Dendritic cell treated with granulocyte-macrophage colony-stimulating factor and Interleukin-4, amounts not matched to agents 40 ng/mL and 50 ng/mL, for 4 days (primary cell): ENCODE measurements at regions of chr1 and their contacts with region 1.

Region 1: GRCh38 chr1:17045634-17046333 is 8.0 kb downstream of the SDHB start:
- H3K4me3 Mint-ChIP-seq: no peak overlapping the region
- H3K27ac Mint-ChIP-seq: peak overlapping the region; percentile 92
- H3K4me1 Mint-ChIP-seq: peaks cover 34% of the 10 kb centered on the region
- H3K27me3 Mint-ChIP-seq: no peaks in the 10 kb centered on the region

Region 2: GRCh38 chr1:16946646-16947045 is 99.1 kb before region 1 on chr1:
- intact Hi-C with region 1: loop called (anchors 1 kb)
- H3K4me3 Mint-ChIP-seq: no peak overlapping the region
- H3K27ac Mint-ChIP-seq: no peak overlapping the region
- H3K4me1 Mint-ChIP-seq: no peaks in the 10 kb centered on the region
- H3K27me3 Mint-ChIP-seq: no peaks in the 10 kb centered on the region

Region 3: DNA sequence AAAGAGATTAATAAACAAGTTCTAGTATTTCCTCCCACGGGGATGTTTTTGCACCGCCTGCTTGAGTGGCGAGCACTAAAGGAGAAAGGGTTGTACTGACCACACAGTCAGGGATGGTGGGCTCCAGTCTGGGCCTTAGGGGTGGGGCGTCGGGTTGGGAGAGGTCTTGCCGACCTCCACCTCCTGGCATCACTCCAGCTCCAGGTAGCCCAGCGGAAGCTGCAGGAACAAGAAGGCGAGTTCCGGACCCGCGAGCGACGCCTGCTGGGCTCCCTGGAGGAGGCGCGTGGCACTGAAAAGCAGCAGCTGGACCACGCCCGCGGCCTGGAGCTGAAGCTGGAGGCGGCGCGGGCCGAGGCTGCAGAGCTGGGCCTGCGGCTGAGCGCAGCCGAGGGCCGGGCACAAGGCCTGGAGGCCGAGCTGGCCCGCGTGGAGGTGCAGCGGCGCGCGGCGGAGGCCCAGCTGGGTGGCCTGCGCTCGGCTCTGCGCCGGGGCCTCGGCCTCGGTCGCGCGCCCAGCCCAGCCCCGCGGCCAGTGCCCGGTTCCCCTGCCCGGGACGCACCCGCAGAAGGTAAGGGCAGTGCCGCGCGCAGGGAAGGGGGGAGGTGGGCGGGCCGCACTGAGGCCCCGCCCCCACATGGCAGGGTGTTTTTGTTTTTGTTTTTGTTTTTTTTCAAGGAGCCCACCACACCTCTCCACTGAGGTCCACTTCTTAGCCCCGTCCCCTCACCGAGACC is 85.1 kb before region 1 on chr1:
- intact Hi-C with region 1: loop called (anchors 2 kb)
- H3K4me3 Mint-ChIP-seq: peak overlapping the region; percentile 55
- H3K27ac Mint-ChIP-seq: peak overlapping the region; percentile 45
- H3K4me1 Mint-ChIP-seq: peaks cover 8% of the 10 kb centered on the region
- H3K27me3 Mint-ChIP-seq: peaks cover 2% of the 10 kb centered on the region

Region 4: DNA sequence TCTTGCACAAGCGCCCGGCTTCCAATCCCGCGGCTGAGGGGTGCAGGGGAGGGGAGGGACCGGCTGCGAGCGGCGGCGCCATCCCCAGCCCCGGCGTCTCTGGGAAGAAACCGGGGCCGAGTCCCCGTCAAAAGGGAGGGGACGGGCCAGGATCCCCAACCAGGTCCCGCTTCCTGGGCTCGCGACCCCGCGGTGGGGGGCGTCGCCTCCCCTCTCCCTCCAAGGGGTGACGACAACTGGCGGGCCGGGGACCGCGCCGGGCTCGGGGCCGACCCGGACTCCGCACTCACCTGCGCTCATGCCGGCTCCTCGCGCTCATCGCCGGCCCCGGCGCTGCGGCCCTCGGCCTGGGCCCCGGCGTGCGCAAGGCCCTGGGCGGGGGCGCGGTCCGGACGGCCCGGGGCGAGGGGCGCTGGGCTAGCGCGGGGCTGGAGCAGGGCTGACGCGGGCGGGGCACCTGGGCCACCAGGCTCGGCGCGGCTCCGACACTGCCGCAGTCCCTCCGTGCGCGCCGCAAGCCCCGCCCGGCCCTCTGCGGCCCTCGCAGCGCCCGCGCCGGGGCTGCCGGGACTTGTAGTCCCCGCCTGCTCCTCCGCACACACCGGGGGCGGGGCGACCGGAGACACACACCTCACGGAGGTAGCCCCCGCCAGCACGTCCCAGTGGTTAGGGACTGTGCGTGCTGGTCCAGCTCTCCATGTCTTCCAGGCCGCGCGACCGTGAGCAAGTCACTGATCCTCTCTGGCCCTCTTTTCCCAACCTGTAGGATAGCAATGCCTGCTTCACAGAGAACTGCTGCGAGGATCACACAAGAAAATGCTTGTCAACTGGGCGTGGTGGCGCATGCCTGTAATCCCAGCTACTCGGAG is 34.1 kb before region 1 on chr1 and contains the start of gene ATP13A2:
- intact Hi-C with region 1: loop called (anchors 5 kb)
- H3K4me3 Mint-ChIP-seq: peak within 1 kb of the TSS; percentile 80
- H3K27ac Mint-ChIP-seq: peak within 1 kb of the TSS; percentile 60
- H3K4me1 Mint-ChIP-seq: peaks cover 52% of the 10 kb centered on the region
- H3K27me3 Mint-ChIP-seq: peaks cover 10% of the 10 kb centered on the region

Region 5: DNA sequence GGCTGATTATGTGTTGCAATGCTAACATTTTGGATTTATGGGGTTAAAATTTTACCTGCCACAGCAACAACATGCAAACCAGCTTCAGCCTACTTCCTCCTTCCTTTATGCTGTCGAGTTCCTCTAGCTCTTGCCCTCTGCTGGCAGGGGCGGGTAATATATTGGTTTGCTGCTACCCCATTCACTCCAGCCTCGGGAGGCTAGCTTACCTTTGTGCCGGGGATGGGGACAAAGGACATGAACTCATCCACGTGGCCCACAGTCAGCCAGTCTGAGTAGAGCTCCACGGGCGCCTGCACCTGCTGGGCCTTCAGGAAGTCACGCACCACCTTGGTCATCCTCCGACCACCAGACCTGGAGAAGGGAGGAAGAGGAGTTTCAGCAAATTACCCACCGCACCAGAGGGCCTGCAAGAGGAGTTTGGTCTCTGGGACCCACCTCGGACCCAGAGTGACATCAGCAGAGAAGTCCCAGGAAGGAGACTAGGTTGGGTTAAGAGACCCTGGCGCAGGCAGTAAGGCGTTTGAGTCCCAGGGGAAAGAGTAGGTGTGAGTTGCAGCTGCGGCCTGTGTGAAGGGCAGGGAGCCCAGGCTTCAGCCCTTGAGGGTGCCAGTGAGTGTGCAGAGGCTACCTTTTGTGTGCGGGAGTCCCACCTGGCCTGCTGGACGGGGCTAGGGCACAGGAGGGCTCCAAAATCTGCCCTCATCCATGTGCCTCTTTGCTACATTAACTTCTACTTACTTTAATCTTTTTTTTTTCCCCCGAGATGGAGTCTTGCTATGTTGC is 29.9 kb after region 1 on chr1:
- intact Hi-C with region 1: no loop called
- H3K4me3 Mint-ChIP-seq: no peak overlapping the region
- H3K27ac Mint-ChIP-seq: no peak overlapping the region
- H3K4me1 Mint-ChIP-seq: peaks cover 13% of the 10 kb centered on the region
- H3K27me3 Mint-ChIP-seq: no peaks in the 10 kb centered on the region